CD14-positive monocyte (primary cell): ENCODE measurements at regions of chr18 and their contacts with region 1.

Region 1: GRCh38 chr18:33051407-33051806 is 278.6 kb upstream of the KLHL14 start:
- DNase-seq: no peak
- H3K4me3 ChIP-seq: no peak overlapping the region
- H3K4me3 Mint-ChIP-seq: no peak overlapping the region
- H3K27ac ChIP-seq: no peak overlapping the region
- H3K27ac Mint-ChIP-seq: no peak overlapping the region
- H3K4me1 ChIP-seq: no peaks in the 10 kb centered on the region
- H3K4me1 Mint-ChIP-seq: no peaks in the 10 kb centered on the region
- H3K27me3 ChIP-seq: no peaks in the 10 kb centered on the region
- H3K27me3 Mint-ChIP-seq: no peaks in the 10 kb centered on the region
- CTCF ChIP-seq: no peak

Region 2: GRCh38 chr18:32884543-32884942 is 166.9 kb before region 1 on chr18:
- intact Hi-C with region 1: no loop called
- DNase-seq: no peak
- H3K4me3 ChIP-seq: no peak overlapping the region
- H3K4me3 Mint-ChIP-seq: no peak overlapping the region
- H3K27ac ChIP-seq: no peak overlapping the region
- H3K27ac Mint-ChIP-seq: no peak overlapping the region
- H3K4me1 ChIP-seq: no peaks in the 10 kb centered on the region
- H3K4me1 Mint-ChIP-seq: no peaks in the 10 kb centered on the region
- H3K27me3 ChIP-seq: no peaks in the 10 kb centered on the region
- H3K27me3 Mint-ChIP-seq: no peaks in the 10 kb centered on the region
- CTCF ChIP-seq: no peak

Region 3: GRCh38 chr18:33097126-33097525 is 45.7 kb after region 1 on chr18:
- intact Hi-C with region 1: loop called in 1 of 2 experiments (anchors 5 kb)
- DNase-seq: no peak
- H3K4me3 ChIP-seq: no peak overlapping the region
- H3K4me3 Mint-ChIP-seq: no peak overlapping the region
- H3K27ac ChIP-seq: no peak overlapping the region
- H3K27ac Mint-ChIP-seq: no peak overlapping the region
- H3K4me1 ChIP-seq: no peaks in the 10 kb centered on the region
- H3K4me1 Mint-ChIP-seq: no peaks in the 10 kb centered on the region
- H3K27me3 ChIP-seq: no peaks in the 10 kb centered on the region
- H3K27me3 Mint-ChIP-seq: no peaks in the 10 kb centered on the region
- CTCF ChIP-seq: no peak